SK-N-SH (cell line): ENCODE measurements at regions of chr13 and their contacts with region 1.

Region 1: GRCh38 chr13:53250266-53250875 is 221.8 kb downstream of the OLFM4 start:
- DNase-seq: peak; percentile 57
- H3K4me3 ChIP-seq: peak overlapping the region in 1 of 2 experiments; percentile 38; a peak in 1 of 4 replicates
- H3K27ac ChIP-seq: no peak overlapping the region
- H3K4me1 ChIP-seq: no peaks in the 10 kb centered on the region
- H3K27me3 ChIP-seq: no peaks in the 10 kb centered on the region
- CTCF ChIP-seq: peak; percentile 95
- EP300 ChIP-seq: no peak
- RAD21 ChIP-seq: peak; percentile 94

Region 2: DNA sequence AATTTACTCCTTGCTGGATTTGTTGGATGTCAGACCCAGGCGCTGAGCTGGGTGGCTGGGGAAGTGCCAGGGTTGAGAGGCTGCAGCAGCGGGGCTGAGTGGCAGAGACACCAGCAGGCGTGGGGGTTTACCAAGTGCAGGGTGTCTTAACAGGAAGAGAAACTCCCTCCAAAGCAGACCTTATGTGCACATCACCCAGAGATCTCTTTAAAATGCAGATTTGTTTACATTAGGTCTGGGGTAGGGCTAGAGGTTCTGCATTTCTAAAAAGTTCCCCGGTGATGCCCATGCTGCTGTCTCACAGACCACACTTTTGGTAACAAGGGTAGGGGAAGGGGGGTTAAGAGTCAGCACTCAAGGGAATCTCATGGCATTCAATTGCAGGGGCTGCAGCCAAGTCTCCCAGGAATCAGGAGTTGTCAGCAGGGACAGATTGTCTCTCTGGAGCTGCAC is 302.4 kb before region 1 on chr13:
- CTCF ChIA-PET with region 1: no interaction called
- POLR2A ChIA-PET with region 1: no interaction called
- DNase-seq: no peak
- H3K4me3 ChIP-seq: no peak overlapping the region
- H3K27ac ChIP-seq: no peak overlapping the region
- H3K4me1 ChIP-seq: no peaks in the 10 kb centered on the region
- H3K27me3 ChIP-seq: no peaks in the 10 kb centered on the region
- CTCF ChIP-seq: no peak
- EP300 ChIP-seq: no peak
- RAD21 ChIP-seq: no peak

Region 3: DNA sequence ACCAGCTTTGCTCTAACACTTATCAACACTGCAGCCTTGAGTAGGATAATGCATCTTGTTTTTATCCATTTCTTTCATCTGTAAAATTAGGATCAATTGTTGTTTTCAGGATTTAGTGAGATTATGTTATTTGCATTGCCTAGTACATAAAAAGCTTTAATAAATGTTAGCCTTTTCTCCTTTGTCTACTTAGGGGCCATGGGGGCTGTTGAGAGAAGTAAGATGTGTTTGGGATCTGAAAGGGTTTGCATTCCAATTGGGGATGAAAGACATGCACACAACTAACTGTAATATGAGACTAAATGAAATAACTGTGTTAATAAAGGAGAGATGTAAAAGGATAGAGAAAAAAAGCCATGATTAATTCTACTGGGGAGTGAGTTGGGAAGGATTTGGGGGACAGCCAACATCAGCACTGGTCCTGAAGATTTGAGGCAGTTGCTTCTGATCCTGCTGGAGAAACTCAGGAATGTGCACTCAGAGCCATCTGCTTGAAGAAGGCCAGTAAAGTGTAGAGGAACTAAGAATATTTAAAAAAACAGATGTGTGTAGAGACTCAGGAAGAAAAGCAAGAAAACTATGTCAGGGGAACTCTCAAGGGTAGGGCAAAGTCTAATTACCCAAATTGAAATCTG is 14.5 kb after region 1 on chr13:
- CTCF ChIA-PET with region 1: interaction called, 14 read pairs
- POLR2A ChIA-PET with region 1: no interaction called
- DNase-seq: no peak
- H3K4me3 ChIP-seq: no peak overlapping the region
- H3K27ac ChIP-seq: no peak overlapping the region
- H3K4me1 ChIP-seq: no peaks in the 10 kb centered on the region
- H3K27me3 ChIP-seq: no peaks in the 10 kb centered on the region
- CTCF ChIP-seq: no peak
- EP300 ChIP-seq: no peak
- RAD21 ChIP-seq: no peak

Region 4: DNA sequence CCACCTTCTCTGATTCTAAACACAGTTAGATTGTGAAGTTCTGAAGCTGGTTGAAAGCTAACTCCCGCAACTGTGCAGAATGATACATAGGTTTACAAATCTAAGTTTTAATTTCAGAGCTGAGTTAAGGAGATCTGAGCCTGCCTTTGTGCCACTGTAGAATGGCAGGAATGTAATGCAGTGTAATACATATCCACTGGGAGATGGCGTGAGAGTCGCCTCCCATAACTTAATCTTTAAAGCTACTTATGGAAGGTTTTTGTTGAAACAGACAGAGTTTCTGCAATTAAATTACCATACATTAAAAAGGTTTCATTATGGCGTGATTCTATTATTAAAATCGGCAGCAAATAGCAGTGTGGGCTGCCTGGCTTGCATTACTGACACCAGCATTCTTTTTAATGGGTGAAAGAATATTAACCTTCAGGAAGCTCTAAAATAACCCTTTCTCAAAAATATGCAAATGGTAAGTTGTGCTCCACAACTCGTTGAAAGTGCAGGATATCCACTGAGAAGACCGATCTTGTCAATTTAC is 35.6 kb after region 1 on chr13:
- CTCF ChIA-PET with region 1: interaction called, 11 read pairs
- POLR2A ChIA-PET with region 1: no interaction called
- DNase-seq: no peak
- H3K4me3 ChIP-seq: no peak overlapping the region
- H3K27ac ChIP-seq: no peak overlapping the region
- H3K4me1 ChIP-seq: no peaks in the 10 kb centered on the region
- H3K27me3 ChIP-seq: no peaks in the 10 kb centered on the region
- CTCF ChIP-seq: no peak
- EP300 ChIP-seq: no peak
- RAD21 ChIP-seq: no peak

Region 5: DNA sequence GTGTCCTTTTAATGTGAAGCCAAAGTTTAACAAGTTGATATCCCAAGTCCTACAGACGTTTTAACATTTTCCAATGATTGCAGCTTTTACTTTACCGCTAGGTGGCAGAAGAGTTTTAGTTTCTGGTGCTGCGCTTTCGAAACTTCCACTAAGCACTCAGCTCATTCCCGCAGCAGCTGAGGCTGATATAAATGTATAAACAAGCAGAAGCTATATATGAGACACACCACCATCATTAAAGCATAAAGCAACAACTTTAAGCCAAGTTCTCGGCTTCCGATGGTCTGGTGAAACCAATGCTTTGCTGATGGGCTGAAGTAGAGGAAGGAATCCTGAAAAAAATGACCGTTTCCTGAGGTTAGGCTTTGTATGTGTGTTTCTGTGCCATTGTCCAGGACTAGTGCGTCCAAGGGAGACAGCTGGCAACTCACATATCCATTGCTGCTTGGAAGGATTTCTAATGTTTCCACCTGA is 532.2 kb after region 1 on chr13:
- CTCF ChIA-PET with region 1: interaction called, 30 read pairs
- POLR2A ChIA-PET with region 1: no interaction called
- DNase-seq: peak; percentile 30
- H3K4me3 ChIP-seq: peak overlapping the region; percentile 17 to 53; a peak in 2 of 4 replicates
- H3K27ac ChIP-seq: no peak overlapping the region
- H3K4me1 ChIP-seq: no peaks in the 10 kb centered on the region
- H3K27me3 ChIP-seq: no peaks in the 10 kb centered on the region
- CTCF ChIP-seq: peak; percentile 78
- EP300 ChIP-seq: no peak
- RAD21 ChIP-seq: peak; percentile 83

Region 6: GRCh38 chr13:54305377-54305776 is 1055.0 kb after region 1 on chr13:
- CTCF ChIA-PET with region 1: interaction called, 10 read pairs
- POLR2A ChIA-PET with region 1: no interaction called
- DNase-seq: no peak
- H3K4me3 ChIP-seq: no peak overlapping the region
- H3K27ac ChIP-seq: no peak overlapping the region
- H3K4me1 ChIP-seq: no peaks in the 10 kb centered on the region
- H3K27me3 ChIP-seq: no peaks in the 10 kb centered on the region
- CTCF ChIP-seq: no peak
- EP300 ChIP-seq: no peak
- RAD21 ChIP-seq: no peak